RWPE1 (cell line): ENCODE measurements at regions of chr18 and their contacts with region 1.

Region 1: GRCh38 chr18:21194871-21195771 is 46.9 kb upstream of the GREB1L start:
- DNase-seq: peak; percentile 23
- H3K27ac ChIP-seq: no peak overlapping the region
- CTCF ChIP-seq: peak; percentile 76

Region 2: DNA sequence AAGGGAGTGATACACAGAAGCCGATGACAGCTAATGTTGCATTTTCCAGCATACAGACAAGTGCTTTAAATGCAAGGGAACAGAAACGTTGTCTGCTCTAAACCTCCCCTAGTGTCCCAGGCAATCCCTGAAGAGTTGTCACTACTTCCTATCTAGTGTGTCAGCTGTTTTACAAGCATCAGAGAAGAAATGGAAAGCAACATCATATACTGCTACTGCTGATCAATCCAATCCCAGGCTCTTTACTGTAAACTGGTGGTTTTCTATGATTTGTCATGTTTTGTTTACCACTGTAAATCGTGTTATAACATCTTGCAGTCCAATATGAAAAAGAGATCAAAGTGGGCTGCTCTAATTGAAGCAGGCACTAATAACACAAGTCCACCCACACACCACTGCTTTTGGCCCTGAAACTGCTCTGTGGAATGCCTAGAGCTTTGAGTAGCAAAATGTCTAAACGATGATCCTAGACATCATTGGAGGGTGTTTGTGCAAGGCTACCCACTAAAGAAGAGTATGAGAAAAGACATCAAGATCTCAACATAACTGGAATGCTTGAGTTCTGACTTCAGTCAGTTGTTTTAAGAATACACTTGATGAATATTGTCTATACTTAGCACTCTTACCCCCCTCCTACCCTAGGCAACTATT is 65.4 kb before region 1 on chr18:
- CTCF ChIA-PET with region 1: no interaction called
- POLR2A ChIA-PET with region 1: no interaction called
- DNase-seq: no peak
- H3K27ac ChIP-seq: no peak overlapping the region
- CTCF ChIP-seq: no peak

Region 3: GRCh38 chr18:21444465-21445023 is 249.4 kb after region 1 on chr18:
- CTCF ChIA-PET with region 1: interaction called, 24 read pairs
- POLR2A ChIA-PET with region 1: no interaction called
- DNase-seq: peak; percentile 55
- H3K27ac ChIP-seq: no peak overlapping the region
- CTCF ChIP-seq: peak; percentile 76